ENCODE measurements at regions of chr20 and their contacts with region 1.

Region 1: GRCh38 chr20:13458860-13459451 is 179.8 kb downstream of the TASP1 start:
- DNase-seq: no peak
- H3K4me3 ChIP-seq: no peak overlapping the region
- H3K27ac ChIP-seq: no peak overlapping the region
- H3K4me1 ChIP-seq: peaks cover 5% of the 10 kb centered on the region
- H3K27me3 ChIP-seq: no peaks in the 10 kb centered on the region
- CTCF ChIP-seq: peak; percentile 82

Region 2: GRCh38 chr20:13212750-13213149 is 246.2 kb before region 1 on chr20:
- intact Hi-C with region 1: no loop called
- DNase-seq: no peak
- H3K4me3 ChIP-seq: no peak overlapping the region
- H3K27ac ChIP-seq: no peak overlapping the region
- H3K4me1 ChIP-seq: no peaks in the 10 kb centered on the region
- H3K27me3 ChIP-seq: peaks cover 35% of the 10 kb centered on the region
- CTCF ChIP-seq: no peak

Region 3: GRCh38 chr20:13771853-13772453 is 313.0 kb after region 1 on chr20:
- intact Hi-C with region 1: loop called (anchors 10 kb)
- DNase-seq: no peak
- H3K4me3 ChIP-seq: no peak overlapping the region
- H3K27ac ChIP-seq: no peak overlapping the region
- H3K4me1 ChIP-seq: no peaks in the 10 kb centered on the region
- H3K27me3 ChIP-seq: no peaks in the 10 kb centered on the region
- CTCF ChIP-seq: peak; percentile 63